Caco-2 (cell line): ENCODE measurements at regions of chr15 and their contacts with region 1.

Region 1: GRCh38 chr15:39453500-39454073 is 127.3 kb upstream of the THBS1 start:
- DNase-seq: no peak
- H3K4me3 ChIP-seq: no peak overlapping the region
- H3K4me3 Mint-ChIP-seq: no peak overlapping the region
- H3K27ac Mint-ChIP-seq: no peak overlapping the region
- H3K4me1 ChIP-seq: peaks cover 28% of the 10 kb centered on the region
- H3K4me1 Mint-ChIP-seq: peaks cover 28% of the 10 kb centered on the region
- H3K27me3 ChIP-seq: no peaks in the 10 kb centered on the region
- H3K27me3 Mint-ChIP-seq: no peaks in the 10 kb centered on the region
- CTCF ChIP-seq: no peak

Region 2: GRCh38 chr15:39267685-39268084 is 185.9 kb before region 1 on chr15:
- CTCF ChIA-PET with region 1: no interaction called
- POLR2A ChIA-PET with region 1: no interaction called
- intact Hi-C with region 1: loop called (anchors 2 kb)
- DNase-seq: no peak
- H3K4me3 ChIP-seq: no peak overlapping the region
- H3K4me3 Mint-ChIP-seq: no peak overlapping the region
- H3K27ac Mint-ChIP-seq: no peak overlapping the region
- H3K4me1 ChIP-seq: peaks cover 48% of the 10 kb centered on the region
- H3K4me1 Mint-ChIP-seq: peaks cover 26% of the 10 kb centered on the region
- H3K27me3 ChIP-seq: no peaks in the 10 kb centered on the region
- H3K27me3 Mint-ChIP-seq: no peaks in the 10 kb centered on the region
- CTCF ChIP-seq: no peak

Region 3: DNA sequence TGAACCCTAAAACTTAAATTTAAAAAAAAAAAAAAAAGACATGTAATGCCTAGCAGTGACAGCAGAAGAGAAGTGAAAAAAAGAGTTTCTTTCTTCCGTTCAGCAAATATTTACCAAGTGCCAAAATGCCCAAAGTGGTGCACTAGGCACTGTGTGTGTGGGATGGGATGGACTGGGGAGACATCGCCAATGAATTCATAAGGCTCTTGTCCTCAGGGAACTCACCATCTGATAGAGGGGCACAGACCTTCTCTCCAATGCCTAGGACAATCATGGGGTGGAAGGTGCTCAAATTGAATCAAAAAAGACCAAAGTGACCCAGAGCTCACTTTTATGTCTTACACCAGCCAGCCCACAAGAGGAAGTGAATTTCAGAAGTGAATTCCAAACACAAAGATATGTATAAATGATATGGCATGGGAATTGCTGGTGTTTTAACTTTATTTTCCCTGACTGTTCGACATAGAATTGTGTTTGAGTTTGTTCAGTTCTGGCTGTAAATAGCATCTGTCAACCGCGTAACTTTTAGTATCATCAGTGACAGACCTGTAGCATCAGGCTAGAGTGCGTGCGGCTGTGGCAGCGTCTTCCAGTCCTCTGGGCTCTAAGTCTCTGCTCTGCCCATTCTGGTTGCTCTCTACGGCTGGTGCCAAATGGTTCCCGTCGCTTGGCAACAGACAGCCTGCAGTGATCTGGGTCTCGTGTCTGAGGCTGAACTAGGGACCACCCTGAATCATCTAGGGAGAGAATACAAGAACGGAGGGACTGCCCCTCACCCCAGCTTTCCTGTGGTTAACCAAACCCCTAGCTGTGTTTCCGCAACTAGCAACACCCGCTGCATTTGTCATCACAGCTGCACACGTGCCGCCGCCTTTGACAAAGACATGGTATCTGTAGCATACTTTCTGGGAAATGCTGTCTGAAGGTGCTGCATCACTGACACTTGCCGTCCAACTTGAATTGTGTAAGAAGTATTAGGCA is 26.7 kb before region 1 on chr15:
- CTCF ChIA-PET with region 1: no interaction called
- POLR2A ChIA-PET with region 1: no interaction called
- intact Hi-C with region 1: no loop called
- DNase-seq: no peak
- H3K4me3 ChIP-seq: no peak overlapping the region
- H3K4me3 Mint-ChIP-seq: no peak overlapping the region
- H3K27ac Mint-ChIP-seq: no peak overlapping the region
- H3K4me1 ChIP-seq: no peaks in the 10 kb centered on the region
- H3K4me1 Mint-ChIP-seq: no peaks in the 10 kb centered on the region
- H3K27me3 ChIP-seq: no peaks in the 10 kb centered on the region
- H3K27me3 Mint-ChIP-seq: no peaks in the 10 kb centered on the region
- CTCF ChIP-seq: no peak

Region 4: DNA sequence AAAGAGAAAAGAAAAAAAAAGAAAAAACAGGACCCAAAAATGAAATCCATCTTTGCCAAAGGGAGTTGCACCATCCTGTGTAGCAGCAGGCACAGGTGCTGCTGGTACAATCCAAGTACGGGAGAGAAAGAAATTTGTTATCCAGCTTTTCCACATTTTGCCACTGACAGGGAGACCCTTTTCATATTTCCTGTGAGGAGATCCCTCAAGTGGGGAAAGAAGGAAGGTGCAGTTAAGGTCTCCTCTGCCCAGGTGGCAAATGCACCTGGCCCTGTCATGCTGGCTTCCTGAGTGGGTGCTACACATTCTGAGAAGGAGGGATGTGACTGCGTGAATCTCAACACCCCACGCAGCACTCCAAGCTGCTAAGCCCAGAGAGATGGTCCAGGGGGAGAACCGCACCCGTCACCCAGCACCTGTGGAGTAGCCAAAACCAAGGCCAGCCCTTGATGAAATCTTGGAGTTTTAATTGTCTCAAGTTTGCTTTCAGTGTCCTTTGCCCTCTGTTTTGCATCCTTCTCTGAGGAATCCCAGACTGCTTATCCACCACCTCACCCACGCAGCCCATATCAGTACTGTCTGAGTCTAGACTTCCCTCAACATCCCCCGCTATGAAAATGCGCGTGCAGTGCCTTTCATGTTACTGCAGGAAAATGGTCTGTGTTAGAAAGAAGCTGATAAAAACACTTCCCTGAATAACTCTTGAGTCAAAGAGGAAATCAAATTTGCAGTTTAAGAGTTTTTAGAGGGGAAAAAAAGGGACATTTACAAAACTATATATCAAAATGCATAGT is 14.6 kb before region 1 on chr15:
- CTCF ChIA-PET with region 1: interaction called, 6 read pairs
- POLR2A ChIA-PET with region 1: no interaction called
- intact Hi-C with region 1: loop called (anchors 1 kb)
- DNase-seq: peak; percentile 44 to 48
- H3K4me3 ChIP-seq: no peak overlapping the region
- H3K4me3 Mint-ChIP-seq: no peak overlapping the region
- H3K27ac Mint-ChIP-seq: no peak overlapping the region
- H3K4me1 ChIP-seq: peaks cover 26% of the 10 kb centered on the region
- H3K4me1 Mint-ChIP-seq: peaks cover 24% of the 10 kb centered on the region
- H3K27me3 ChIP-seq: no peaks in the 10 kb centered on the region
- H3K27me3 Mint-ChIP-seq: no peaks in the 10 kb centered on the region
- CTCF ChIP-seq: peak; percentile 28 to 47